ENCODE measurements at regions of chr2 and their contacts with region 1.

Region 1: DNA sequence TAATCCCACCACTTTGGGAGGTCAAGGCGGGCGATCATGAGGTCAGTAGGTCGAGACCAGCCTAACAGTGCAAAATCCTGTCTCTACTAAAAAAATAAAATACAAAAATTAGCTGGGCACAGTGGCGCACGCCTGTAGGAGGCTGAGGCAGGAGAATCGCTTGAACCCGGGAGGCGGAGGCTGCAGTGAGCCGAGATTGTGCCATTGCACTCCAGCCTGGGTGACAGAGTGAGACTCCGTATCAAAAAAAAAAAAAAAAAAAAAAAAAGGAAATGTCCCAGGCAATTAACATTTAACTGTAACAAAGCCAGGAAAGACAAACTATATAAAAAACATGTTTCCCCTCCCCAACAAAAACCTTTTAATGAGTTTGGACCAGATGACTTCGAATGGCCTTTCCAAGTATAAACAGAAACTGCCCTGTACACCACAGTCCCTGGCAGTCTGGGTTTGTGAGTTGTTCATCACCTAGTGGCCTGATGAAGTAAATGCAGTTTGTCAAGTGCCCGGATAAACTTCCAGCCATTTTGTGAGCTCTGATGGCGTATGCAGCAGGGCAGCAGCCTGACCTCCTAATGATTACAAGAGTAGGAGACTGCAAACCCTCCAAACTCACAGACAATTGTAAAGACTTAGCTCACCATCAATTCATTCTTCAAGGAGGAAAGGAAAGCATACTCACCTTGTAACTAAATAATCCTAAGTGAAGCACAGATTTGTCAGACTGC is 16.6 kb upstream of the PCBP1 start:
- DNase-seq: peak; percentile 70
- H3K4me3 ChIP-seq: no peak overlapping the region
- CTCF ChIP-seq: peak; percentile 79

Region 2: DNA sequence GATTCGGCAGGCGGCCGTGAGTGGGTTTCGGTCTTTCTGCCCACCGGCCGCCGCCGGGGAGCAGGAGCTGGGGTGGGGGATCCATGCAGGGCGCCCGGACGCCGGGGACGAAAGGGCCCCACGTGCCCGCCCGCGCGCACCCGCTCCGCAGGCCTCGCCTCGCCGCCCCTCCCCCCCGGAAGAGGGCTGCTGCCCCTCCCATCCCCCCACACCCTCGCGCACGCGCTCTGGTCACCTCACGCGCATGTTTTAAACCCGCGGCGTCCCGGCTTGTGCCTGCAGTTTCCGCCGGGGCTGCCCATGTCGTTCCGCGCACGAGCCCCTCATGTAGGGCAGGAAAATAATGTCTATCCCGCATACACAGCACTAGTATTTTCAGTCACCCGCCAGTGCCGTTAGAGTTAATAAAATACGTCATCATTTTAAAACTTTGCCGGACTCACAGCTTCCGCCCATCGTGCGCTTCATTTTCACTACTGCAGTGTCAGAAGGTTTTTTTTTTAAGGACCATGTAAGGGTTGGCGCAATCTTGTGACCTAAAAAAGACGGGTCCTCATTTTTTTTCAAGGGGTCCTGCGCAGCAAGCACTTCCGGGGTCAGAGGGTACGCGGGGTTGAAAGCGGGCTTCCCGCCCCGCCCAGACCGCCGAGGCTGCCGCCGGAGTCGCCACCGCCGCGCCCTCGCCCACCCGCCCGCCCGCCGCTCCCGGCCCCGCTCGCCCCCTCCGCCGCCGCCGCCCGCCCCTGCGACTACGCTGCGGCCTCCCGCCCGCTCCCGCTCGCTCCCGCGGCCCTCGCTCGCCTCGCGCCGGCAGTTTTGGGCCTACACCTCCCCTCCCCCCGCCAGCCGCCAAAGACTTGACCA is 16.4 kb after region 1 on chr2 and contains the start of gene PCBP1:
- CTCF ChIA-PET with region 1: interaction called, 18 read pairs
- POLR2A ChIA-PET with region 1: interaction called, 4 read pairs
- DNase-seq: peak; percentile 81
- H3K4me3 ChIP-seq: peak within 1 kb of the TSS; percentile 83
- CTCF ChIP-seq: no peak

Measured in AG04449 (cell line).